ENCODE measurements at regions of chr5 and their contacts with region 1.

Region 1: GRCh38 chr5:69189162-69190086 is at the start of gene CENPH:
- DNase-seq: peak; percentile 96
- ATAC-seq: peak; percentile 84
- H3K4me3 Mint-ChIP-seq: peak within 1 kb of the TSS; percentile 96
- H3K27ac Mint-ChIP-seq: peak within 1 kb of the TSS; percentile 97
- H3K4me1 Mint-ChIP-seq: peaks cover 17% of the 10 kb centered on the region
- H3K27me3 Mint-ChIP-seq: no peaks in the 10 kb centered on the region
- total RNA-seq, gene CENPH: 48.5 to 50.1 TPM

Region 2: DNA sequence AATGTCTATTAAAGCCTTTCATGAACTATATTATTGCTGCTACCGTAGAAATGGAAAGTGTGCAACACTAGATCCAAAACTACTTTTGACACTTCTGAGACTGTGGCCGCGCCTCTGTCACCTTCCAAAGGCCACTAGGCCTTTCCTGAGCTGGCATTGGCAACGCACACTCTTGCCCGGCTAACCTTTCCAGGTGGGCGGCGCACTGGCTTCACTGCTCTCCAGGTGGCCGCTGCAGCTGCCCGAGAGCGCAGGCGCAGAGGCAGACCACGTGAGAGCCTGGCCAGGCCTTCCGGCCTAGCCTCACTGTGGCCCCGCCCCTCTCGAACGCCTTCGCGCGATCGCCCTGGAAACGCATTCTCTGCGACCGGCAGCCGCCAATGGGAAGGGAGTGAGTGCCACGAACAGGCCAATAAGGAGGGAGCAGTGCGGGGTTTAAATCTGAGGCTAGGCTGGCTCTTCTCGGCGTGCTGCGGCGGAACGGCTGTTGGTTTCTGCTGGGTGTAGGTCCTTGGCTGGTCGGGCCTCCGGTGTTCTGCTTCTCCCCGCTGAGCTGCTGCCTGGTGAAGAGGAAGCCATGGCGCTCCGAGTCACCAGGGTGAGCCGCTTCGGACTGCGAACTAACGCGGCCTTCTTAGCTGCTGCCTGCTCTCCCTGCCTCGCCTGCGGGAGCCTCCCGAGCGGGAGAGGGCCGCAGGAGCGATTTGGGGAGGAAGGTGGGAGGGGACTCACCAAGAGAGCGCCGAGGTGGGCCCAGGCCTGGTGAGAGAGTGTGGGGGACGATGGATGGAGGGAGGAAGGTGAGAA is 22.5 kb before region 1 on chr5 and contains the start of gene CCNB1:
- CTCF ChIA-PET with region 1: interaction called, 16 read pairs
- POLR2A ChIA-PET with region 1: interaction called, 24 read pairs
- DNase-seq: peak; percentile 99
- ATAC-seq: peak; percentile 99
- H3K4me3 Mint-ChIP-seq: peak within 1 kb of the TSS; percentile 89
- H3K27ac Mint-ChIP-seq: peak within 1 kb of the TSS; percentile 93
- H3K4me1 Mint-ChIP-seq: peaks cover 45% of the 10 kb centered on the region
- H3K27me3 Mint-ChIP-seq: no peaks in the 10 kb centered on the region
- total RNA-seq, gene CCNB1: 205 to 218 TPM

Region 3: DNA sequence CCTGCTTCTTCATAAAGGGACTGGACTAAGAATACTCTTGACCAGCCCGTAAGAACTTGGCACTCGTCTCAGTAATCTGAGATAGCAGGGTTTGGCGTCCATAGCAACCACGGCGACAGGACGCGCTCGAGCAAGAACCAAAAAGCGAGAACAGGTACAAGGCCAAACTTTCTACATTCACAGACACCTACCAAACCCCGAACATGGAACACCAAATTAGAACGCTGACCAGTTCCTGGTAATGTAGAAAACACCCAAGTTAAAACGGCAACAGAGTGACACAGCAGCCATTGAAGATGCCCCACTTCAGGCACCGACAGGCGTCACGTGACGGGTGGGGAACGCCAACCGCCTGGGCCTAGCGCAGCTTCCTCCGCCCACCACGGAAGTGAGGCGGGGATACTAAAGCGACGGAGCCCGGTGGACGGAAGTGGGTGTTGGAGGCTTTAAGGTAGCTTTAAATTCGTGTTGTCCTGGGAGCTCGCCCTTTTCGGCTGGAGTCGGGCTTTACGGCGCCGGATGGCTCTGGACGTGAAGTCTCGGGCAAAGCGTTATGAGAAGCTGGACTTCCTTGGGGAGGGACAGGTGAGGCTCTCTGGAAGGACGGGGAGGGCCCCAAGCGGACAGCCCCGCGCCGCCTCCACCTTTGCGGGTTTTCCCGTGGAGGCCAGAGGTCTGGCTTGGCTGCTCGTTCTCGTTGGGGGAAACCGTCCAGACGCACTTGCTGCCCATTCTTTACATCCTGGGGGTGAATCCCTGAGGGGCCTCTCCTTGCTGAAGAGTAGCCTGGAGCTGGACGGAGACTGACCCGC is 45.2 kb after region 1 on chr5 and contains the start of gene CDK7:
- CTCF ChIA-PET with region 1: interaction called, 6 read pairs
- POLR2A ChIA-PET with region 1: interaction called, 12 read pairs
- DNase-seq: peak; percentile 95
- ATAC-seq: peak; percentile 100
- H3K4me3 Mint-ChIP-seq: peak within 1 kb of the TSS; percentile 97
- H3K27ac Mint-ChIP-seq: peak within 1 kb of the TSS; percentile 87
- H3K4me1 Mint-ChIP-seq: peaks cover 33% of the 10 kb centered on the region
- H3K27me3 Mint-ChIP-seq: no peaks in the 10 kb centered on the region
- total RNA-seq, gene CDK7: 23.9 to 28.3 TPM

Region 4: GRCh38 chr5:69454460-69455249 is 265.2 kb after region 1 on chr5:
- CTCF ChIA-PET with region 1: no interaction called
- POLR2A ChIA-PET with region 1: no interaction called
- DNase-seq: no peak
- ATAC-seq: no peak
- H3K4me3 Mint-ChIP-seq: no peak overlapping the region
- H3K27ac Mint-ChIP-seq: no peak overlapping the region
- H3K4me1 Mint-ChIP-seq: no peaks in the 10 kb centered on the region
- H3K27me3 Mint-ChIP-seq: no peaks in the 10 kb centered on the region

Measured in activated CD8-positive, alpha-beta T cell treated with anti-CD3 and anti-CD28 coated beads, Interleukin-2, amount 10 ng/mL, durations not matched to agents 7 days and 5 days (primary cell).